ENCODE measurements at regions of chr20 and their contacts with region 1.

Region 1: GRCh38 chr20:63955827-63956663 is at the start of gene UCKL1:
- DNase-seq: peak; percentile 82 to 95 (median 93)
- ATAC-seq: peak; percentile 91
- H3K4me3 ChIP-seq: peak within 1 kb of the TSS; percentile 87
- H3K4me3 Mint-ChIP-seq: peak within 1 kb of the TSS; percentile 79 to 87 (median 86)
- H3K27ac ChIP-seq: peak within 1 kb of the TSS; percentile 93
- H3K27ac Mint-ChIP-seq: peak within 1 kb of the TSS; percentile 32 to 89 (median 80)
- H3K4me1 ChIP-seq: peaks cover 18 to 26% of the 10 kb centered on the region in 2 donors
- H3K4me1 Mint-ChIP-seq: peaks cover 19 to 37% (median 27%) of the 10 kb centered on the region in 7 donors
- H3K27me3 ChIP-seq: no peaks in the 10 kb centered on the region
- H3K27me3 Mint-ChIP-seq: no peaks in the 10 kb centered on the region
- total RNA-seq, gene UCKL1: 42.0 to 49.0 (median 46.6) TPM

Region 2: DNA sequence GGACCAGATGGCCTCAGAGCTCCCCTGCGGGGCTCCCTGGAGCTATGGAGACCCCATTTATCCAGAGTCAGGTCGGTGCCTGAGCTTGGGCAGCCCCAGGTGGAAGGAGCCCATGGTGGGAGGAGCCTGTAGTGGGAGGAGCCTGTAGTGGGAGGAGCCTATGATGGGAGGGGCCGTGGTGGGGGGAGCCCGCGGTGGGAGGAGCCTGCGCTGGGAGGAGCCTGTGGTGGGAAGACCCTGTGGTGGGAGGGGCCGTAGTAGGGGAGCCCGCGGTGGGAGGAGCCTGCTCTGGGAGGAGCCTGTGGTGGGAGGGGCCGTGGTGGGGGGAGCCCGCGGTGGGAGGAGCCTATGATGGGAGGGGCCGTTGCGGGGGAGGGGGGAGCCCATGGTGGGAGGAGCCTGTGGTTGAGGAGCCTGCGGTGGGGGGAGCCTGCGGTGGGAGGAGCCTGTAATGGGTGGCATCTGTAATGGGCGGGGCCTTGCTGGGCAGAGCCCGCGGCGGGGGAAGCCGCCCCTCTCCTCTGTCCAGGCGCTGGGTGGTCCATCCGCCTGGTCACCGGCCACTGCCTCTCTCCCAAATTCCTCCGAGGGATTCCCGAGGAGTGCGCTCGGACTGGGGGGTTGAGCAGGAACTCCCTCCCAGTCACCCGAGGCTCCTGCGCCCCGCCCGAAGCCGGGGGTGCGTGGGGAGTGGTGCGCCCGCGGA is 402.7 kb before region 1 on chr20:
- CTCF ChIA-PET with region 1: no interaction called
- POLR2A ChIA-PET with region 1: no interaction called
- intact Hi-C with region 1: loop called (anchors 1 to 2 kb)
- DNase-seq: peak; percentile 81 to 96 (median 88)
- ATAC-seq: peak; percentile 92
- H3K4me3 ChIP-seq: peak overlapping the region; percentile 68
- H3K4me3 Mint-ChIP-seq: peak overlapping the region; percentile 70 to 85 (median 76)
- H3K27ac ChIP-seq: peak overlapping the region; percentile 70
- H3K27ac Mint-ChIP-seq: peak overlapping the region; percentile 62 to 97 (median 92)
- H3K4me1 ChIP-seq: peaks cover 13 to 21% of the 10 kb centered on the region in 2 donors
- H3K4me1 Mint-ChIP-seq: peaks cover 9 to 18% (median 13%) of the 10 kb centered on the region in 7 donors
- H3K27me3 ChIP-seq: no peaks in the 10 kb centered on the region
- H3K27me3 Mint-ChIP-seq: peaks cover 0 to 19% (median 5%) of the 10 kb centered on the region in 5 donors

Region 3: GRCh38 chr20:63782051-63782471 is 174.0 kb before region 1 on chr20:
- CTCF ChIA-PET with region 1: no interaction called
- POLR2A ChIA-PET with region 1: no interaction called
- intact Hi-C with region 1: loop called in 1 of 2 experiments (anchors 1 kb)
- DNase-seq: peak in 6 of 9 donors; percentile 60 to 74 (median 64)
- ATAC-seq: peak; percentile 95
- H3K4me3 ChIP-seq: no peak overlapping the region
- H3K4me3 Mint-ChIP-seq: peak overlapping the region in 8 of 10 donors; percentile 31 to 78 (median 48)
- H3K27ac ChIP-seq: no peak overlapping the region
- H3K27ac Mint-ChIP-seq: peak overlapping the region in 6 of 9 donors; percentile 55 to 92 (median 64)
- H3K4me1 ChIP-seq: peaks cover 8 to 9% of the 10 kb centered on the region in 2 donors
- H3K4me1 Mint-ChIP-seq: peaks cover 9 to 24% (median 18%) of the 10 kb centered on the region in 7 donors
- H3K27me3 ChIP-seq: no peaks in the 10 kb centered on the region
- H3K27me3 Mint-ChIP-seq: no peaks in the 10 kb centered on the region

Region 4: GRCh38 chr20:63973636-63974402 is 17.8 kb after region 1 on chr20:
- CTCF ChIA-PET with region 1: interaction called, 8 read pairs
- POLR2A ChIA-PET with region 1: interaction called, 21 read pairs
- intact Hi-C with region 1: loop called (anchors 1 kb)
- DNase-seq: peak; percentile 59 to 89 (median 78)
- ATAC-seq: peak; percentile 81
- H3K4me3 ChIP-seq: no peak overlapping the region
- H3K4me3 Mint-ChIP-seq: peak overlapping the region in 5 of 10 donors; percentile 7 to 71 (median 36)
- H3K27ac ChIP-seq: peak overlapping the region; percentile 35
- H3K27ac Mint-ChIP-seq: peak overlapping the region; percentile 16 to 88 (median 71)
- H3K4me1 ChIP-seq: peaks cover 16 to 36% of the 10 kb centered on the region in 2 donors
- H3K4me1 Mint-ChIP-seq: peaks cover 34 to 63% (median 54%) of the 10 kb centered on the region in 7 donors
- H3K27me3 ChIP-seq: no peaks in the 10 kb centered on the region
- H3K27me3 Mint-ChIP-seq: peaks cover 0 to 2% (median 0%) of the 10 kb centered on the region in 5 donors

Region 5: DNA sequence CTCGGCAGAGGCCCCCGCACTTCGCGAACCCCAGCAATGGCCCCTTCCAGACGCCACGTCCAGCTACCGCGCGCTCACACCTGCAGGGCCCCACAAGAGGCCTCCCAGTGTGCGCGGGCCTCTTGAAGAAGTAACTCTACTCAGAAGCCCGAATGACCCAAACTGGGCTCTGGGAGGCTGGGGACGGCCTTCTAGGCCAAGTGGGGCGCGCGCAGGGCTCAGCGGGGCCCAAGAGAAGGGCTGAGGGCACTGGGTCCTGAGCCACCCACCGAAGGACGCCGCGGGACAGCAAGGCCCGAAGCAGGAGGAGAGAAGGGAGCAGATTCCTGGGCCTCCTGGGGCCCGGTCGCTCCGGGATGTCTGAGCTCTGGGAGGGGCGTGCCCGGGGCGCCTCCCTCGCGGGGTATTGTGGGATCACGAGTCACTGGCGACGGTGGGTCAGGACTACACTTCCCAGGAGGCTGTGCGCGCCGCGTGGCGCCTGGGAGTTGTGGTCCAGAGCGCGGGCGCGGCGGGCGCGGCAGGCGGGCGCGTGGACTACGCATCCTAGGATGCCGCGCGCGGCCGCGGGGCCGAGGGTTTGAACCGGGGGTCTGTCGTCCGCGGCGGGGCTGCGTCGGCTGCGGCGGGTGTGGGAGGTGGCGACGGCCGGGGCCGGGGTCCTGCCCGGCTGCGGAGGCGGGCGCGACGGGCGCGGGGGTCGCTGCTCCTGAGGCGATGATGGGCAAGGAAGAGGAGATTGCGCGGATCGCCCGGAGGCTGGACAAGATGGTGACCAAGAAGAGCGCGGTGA is 106.7 kb after region 1 on chr20 and contains the start of gene TCEA2:
- CTCF ChIA-PET with region 1: interaction called, 3 read pairs
- POLR2A ChIA-PET with region 1: interaction called, 6 read pairs
- intact Hi-C with region 1: loop called (anchors 1 kb)
- DNase-seq: peak; percentile 85 to 95 (median 90)
- ATAC-seq: peak; percentile 97
- H3K4me3 ChIP-seq: peak within 1 kb of the TSS; percentile 56
- H3K4me3 Mint-ChIP-seq: peak within 1 kb of the TSS; percentile 83 to 95 (median 88)
- H3K27ac ChIP-seq: peak within 1 kb of the TSS; percentile 74
- H3K27ac Mint-ChIP-seq: peak within 1 kb of the TSS; percentile 69 to 95 (median 79)
- H3K4me1 ChIP-seq: peaks cover 23 to 40% of the 10 kb centered on the region in 2 donors
- H3K4me1 Mint-ChIP-seq: peaks cover 30 to 54% (median 37%) of the 10 kb centered on the region in 7 donors
- H3K27me3 ChIP-seq: no peaks in the 10 kb centered on the region
- H3K27me3 Mint-ChIP-seq: no peaks in the 10 kb centered on the region
- total RNA-seq, gene TCEA2: 35.5 to 73.2 (median 47.3) TPM

Measured in naive thymus-derived CD4-positive, alpha-beta T cell (primary cell).